ENCODE measurements at regions of chr19 and their contacts with region 1.

Region 1: DNA sequence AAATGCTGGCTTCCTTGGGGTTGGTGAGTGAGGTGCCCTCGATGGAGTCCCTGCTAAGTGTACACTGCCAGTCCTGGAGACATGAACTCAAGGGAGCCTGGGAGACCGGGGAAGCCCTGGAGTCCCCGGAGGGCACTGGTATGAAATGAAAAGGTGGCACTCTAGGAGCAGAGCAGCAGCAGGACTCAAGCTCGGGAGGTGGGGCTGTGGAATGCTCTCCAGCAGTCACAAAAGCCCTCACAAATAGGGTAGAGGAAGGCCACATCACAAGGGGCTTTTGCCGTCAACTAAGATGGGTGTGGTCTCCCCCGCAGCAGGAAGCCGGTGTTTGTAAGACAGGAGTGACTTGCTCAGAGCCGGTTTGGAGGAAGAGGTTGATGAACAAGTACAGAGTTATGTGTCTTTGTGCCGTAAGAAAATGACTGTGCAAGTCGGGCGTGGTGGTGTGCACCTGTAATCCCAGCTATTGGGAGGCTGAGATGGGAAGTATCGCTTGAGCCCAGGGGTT is 19.3 kb downstream of the CCNE1 start:
- DNase-seq: peak; percentile 78
- ATAC-seq: peak; percentile 96
- H3K4me3 Mint-ChIP-seq: peak overlapping the region; percentile 53
- H3K27ac Mint-ChIP-seq: peak overlapping the region; percentile 88
- H3K4me1 Mint-ChIP-seq: peaks cover 44% of the 10 kb centered on the region
- H3K27me3 Mint-ChIP-seq: no peaks in the 10 kb centered on the region
- CTCF ChIP-seq: no peak

Region 2: GRCh38 chr19:29812080-29812880 is 18.8 kb before region 1 on chr19:
- CTCF ChIA-PET with region 1: interaction called, 3 read pairs
- POLR2A ChIA-PET with region 1: interaction called, 11 read pairs
- intact Hi-C with region 1: loop called (anchors 2 kb)
- DNase-seq: peak; percentile 16
- ATAC-seq: peak; percentile 2
- H3K4me3 Mint-ChIP-seq: peak overlapping the region; percentile 83
- H3K27ac Mint-ChIP-seq: peak overlapping the region; percentile 81
- H3K4me1 Mint-ChIP-seq: peaks cover 19% of the 10 kb centered on the region
- H3K27me3 Mint-ChIP-seq: no peaks in the 10 kb centered on the region
- CTCF ChIP-seq: no peak

Region 3: DNA sequence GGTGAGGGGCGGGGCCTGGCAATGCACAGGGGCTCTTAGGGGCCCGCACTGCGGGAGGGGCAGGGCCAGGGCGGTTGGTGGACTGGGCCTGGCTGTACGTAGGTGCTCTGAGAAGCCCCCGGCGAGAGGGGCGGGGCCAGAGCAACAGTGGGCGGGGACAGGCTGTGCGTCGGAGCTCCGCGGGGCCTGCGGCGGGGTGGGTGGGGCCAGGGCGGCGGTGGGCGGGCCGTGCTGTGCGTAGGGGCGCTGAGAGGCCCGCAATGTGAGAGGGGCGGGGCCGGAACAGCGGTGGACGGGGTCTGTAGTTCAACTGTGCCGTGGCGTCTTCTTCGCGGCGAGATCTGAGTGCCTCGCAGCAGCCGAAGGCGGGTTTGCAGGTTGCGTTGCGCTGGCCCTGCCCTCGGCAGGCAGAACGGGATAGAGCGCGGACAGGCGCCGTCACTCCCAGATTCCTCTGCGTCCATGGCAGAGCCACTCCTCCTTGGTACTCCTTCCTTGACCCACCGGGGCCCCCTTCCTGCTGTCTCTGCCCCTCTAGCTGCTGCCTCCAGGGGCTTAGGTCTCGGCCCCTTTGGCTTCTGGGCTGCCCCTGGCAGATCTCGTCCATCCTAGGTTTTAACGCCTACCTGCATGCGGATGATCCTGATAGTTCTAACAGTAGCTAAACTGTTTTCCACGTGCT is 13.9 kb after region 1 on chr19:
- CTCF ChIA-PET with region 1: interaction called, 10 read pairs
- POLR2A ChIA-PET with region 1: interaction called, 4 read pairs
- intact Hi-C with region 1: no loop called
- DNase-seq: peak; percentile 97
- ATAC-seq: peak; percentile 85
- H3K4me3 Mint-ChIP-seq: peak overlapping the region; percentile 84
- H3K27ac Mint-ChIP-seq: peak overlapping the region; percentile 88
- H3K4me1 Mint-ChIP-seq: peaks cover 10% of the 10 kb centered on the region
- H3K27me3 Mint-ChIP-seq: no peaks in the 10 kb centered on the region
- CTCF ChIP-seq: no peak

Measured in activated CD8-positive, alpha-beta T cell treated with anti-CD3 and anti-CD28 coated beads for 36 hours (primary cell).